Activated CD4-positive, alpha-beta memory T cell treated with anti-CD3 and anti-CD28 coated beads, Interleukin-2, amount 10 ng/mL, durations not matched to agents 7 days and 5 days (primary cell): ENCODE measurements at regions of chr17 and their contacts with region 1.

Region 1: DNA sequence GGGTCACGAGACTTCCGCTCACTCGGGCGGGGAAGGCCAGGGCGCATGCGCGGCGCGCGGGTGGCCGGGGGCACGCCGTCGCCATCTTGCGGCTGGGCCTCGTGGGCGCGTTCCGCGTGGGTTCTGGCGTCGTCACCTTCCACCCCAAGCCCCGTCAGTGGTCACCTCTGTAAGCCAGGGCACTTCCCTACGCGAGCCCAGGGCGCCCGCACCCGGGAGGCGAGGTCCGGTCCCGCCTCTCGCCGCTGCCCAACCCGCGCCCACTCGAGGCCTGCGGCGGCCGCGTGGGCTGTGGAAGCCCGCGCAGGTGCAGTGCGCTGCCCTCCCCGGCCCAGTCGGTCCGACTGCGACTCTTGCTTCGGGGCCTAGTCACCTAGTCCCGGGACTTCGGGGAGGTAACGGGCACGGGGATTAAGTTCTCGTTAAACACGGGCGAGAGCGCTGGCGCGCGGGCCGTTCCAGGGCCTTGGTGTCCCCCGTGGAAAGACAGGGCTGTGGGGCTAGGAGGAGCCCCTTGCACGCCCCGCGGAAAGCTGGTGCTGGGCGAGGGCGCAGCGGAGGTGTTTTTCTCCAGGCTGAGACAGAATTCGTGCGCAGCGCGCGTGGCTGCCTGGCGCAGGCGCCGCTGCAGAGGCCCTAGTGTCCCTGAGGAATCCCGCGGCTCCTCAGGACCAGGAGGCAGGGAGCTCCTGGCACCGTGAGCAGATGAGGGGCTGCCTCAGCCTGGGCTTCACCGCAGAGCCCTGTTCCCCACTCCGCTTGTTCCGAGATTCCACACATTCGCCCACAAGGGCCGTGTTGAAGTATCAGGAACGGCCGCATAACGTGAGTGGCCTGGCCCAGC is 472 bp upstream of the ARHGDIA start:
- DNase-seq: peak; percentile 95
- H3K4me3 Mint-ChIP-seq: peak overlapping the region; percentile 74
- H3K27ac Mint-ChIP-seq: peak overlapping the region; percentile 82
- H3K4me1 Mint-ChIP-seq: peaks cover 45% of the 10 kb centered on the region
- H3K27me3 Mint-ChIP-seq: no peaks in the 10 kb centered on the region

Region 2: DNA sequence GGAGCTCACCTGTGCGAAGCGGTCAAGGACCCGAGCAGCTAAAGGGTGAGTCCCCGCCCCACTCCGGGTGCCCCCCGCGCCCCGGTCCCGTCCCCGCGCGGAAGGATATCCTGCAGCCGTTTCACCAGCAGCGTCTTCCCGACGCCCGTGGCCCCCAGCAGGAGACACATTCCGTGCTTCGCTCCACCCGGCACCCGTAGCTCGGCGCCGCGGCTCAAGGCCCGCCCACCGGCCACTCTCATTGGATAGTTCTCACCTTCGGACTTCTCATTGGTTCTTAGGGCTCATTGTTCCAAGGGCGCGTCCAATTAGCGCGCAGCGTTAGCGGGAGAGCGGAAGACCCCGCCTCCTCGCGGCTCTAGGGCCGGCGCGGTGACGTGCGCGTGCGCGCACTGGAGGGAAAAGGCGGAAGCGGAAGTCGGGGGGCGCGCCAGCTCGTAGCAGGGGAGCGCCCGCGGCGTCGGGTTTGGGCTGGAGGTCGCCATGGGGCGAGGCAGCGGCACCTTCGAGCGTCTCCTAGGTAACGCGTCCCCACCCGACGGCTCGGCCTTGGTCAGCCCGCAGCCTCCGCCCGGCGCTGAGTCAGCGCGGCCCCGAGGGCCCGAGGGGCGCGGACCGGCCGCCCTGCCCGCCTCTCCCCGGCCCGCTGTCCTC is 187.9 kb before region 1 on chr17 and contains the starts of genes ARL16 and HGS:
- CTCF ChIA-PET with region 1: no interaction called
- POLR2A ChIA-PET with region 1: interaction called, 11 read pairs
- DNase-seq: peak; percentile 98
- H3K4me3 Mint-ChIP-seq: peak within 1 kb of the TSS; percentile 86
- H3K27ac Mint-ChIP-seq: peak within 1 kb of the TSS; percentile 90
- H3K4me1 Mint-ChIP-seq: peaks cover 42% of the 10 kb centered on the region
- H3K27me3 Mint-ChIP-seq: no peaks in the 10 kb centered on the region
- total RNA-seq, gene ARL16: 17.5 to 17.8 TPM
- total RNA-seq, gene HGS: 122 to 130 TPM

Region 3: GRCh38 chr17:81833160-81833920 is 38.3 kb before region 1 on chr17 and contains the start of gene MCRIP1:
- CTCF ChIA-PET with region 1: no interaction called
- POLR2A ChIA-PET with region 1: interaction called, 41 read pairs
- DNase-seq: peak; percentile 96
- H3K4me3 Mint-ChIP-seq: peak within 1 kb of the TSS; percentile 88
- H3K27ac Mint-ChIP-seq: peak within 1 kb of the TSS; percentile 92
- H3K4me1 Mint-ChIP-seq: peaks cover 31% of the 10 kb centered on the region
- H3K27me3 Mint-ChIP-seq: no peaks in the 10 kb centered on the region
- total RNA-seq, gene MCRIP1: 37.1 to 38.2 TPM

Region 4: DNA sequence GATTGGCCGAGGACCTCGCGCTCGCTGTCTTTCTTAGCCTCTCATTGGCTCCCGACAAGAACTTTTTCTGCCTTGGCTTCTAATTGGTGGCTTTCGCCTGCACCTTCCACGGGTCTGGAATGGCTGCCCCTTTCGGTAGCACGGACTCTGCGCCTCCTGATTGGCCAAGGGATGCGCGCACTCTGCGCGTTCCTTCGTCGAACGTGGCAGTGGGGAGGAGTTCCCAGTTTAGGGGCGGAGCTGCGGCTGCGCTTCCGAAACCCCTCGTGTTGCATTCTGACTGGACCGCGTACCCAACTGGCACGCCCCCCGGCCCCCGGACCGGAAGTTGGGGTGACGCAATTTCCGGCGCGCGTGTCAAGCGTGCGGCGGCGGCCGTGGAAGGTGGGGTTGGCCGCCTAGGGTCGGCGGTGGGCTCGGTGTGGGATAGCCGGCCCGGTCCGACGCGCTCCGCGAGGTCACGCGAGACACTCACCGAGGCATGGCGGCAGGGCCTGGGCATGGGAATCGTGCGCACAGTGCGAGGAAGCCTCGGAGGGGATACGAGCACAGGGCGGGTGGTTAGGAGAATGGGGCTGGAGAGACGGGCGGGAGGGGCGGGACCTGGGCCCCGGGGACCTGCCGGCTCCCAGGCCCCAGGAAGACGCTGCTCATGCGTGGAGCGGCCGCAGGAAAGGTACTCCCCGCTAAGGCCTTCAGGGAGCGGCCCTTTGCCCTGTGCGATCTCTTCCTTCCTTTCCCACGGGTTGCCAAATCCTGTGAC is 10.7 kb before region 1 on chr17:
- CTCF ChIA-PET with region 1: interaction called, 3 read pairs
- POLR2A ChIA-PET with region 1: interaction called, 133 read pairs
- DNase-seq: peak; percentile 99
- H3K4me3 Mint-ChIP-seq: peak overlapping the region; percentile 97
- H3K27ac Mint-ChIP-seq: peak overlapping the region; percentile 97
- H3K4me1 Mint-ChIP-seq: peaks cover 50% of the 10 kb centered on the region
- H3K27me3 Mint-ChIP-seq: no peaks in the 10 kb centered on the region

Region 5: DNA sequence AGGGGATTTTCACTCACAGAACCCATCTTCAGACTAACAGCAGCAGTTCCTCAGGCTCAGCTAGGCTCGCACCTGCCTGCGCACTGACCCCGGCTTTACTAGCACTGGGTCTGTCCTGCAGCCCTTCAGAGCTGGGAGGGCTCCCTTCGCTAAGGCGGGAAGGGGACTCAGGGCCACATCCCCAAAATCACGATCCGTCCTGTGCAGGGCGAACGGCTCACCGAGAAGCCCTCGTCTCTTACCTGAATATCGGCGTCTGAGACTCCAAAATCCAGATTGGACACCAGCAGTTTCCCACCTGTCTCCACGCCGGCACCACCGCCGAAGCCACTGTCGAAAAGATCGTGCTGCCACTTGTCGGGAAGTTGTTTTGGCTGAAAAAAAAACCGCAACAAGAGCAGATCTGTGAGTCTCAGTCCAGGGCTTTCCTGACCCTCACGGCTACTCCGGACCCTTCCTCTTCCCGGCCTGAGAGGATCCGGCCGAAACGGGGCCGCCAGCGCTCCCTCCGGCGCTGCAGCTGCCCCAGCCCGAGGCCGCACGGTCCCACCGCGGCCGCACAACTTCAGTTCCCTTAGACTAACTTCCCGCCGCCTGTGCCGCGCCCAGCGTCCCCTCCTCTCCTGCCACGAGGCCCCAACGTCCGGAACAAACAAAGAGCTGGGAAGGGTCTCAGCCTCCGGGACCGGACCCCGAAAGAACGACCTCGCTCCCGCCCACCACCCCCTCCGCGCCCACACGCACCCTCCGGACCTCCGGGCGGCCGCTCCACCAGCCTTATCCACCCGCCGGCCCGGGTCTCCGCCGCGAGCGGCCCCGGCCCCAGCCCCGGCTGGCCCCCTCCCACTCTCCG is 19.1 kb after region 1 on chr17:
- CTCF ChIA-PET with region 1: no interaction called
- POLR2A ChIA-PET with region 1: interaction called, 140 read pairs
- DNase-seq: peak; percentile 46
- H3K4me3 Mint-ChIP-seq: peak overlapping the region; percentile 87
- H3K27ac Mint-ChIP-seq: peak overlapping the region; percentile 94
- H3K4me1 Mint-ChIP-seq: peaks cover 43% of the 10 kb centered on the region
- H3K27me3 Mint-ChIP-seq: no peaks in the 10 kb centered on the region

Region 6: GRCh38 chr17:81927653-81928543 is 56.3 kb after region 1 on chr17 and contains the start of gene MAFG:
- CTCF ChIA-PET with region 1: interaction called, 6 read pairs
- POLR2A ChIA-PET with region 1: interaction called, 62 read pairs
- DNase-seq: peak; percentile 91
- H3K4me3 Mint-ChIP-seq: peak within 1 kb of the TSS; percentile 91
- H3K27ac Mint-ChIP-seq: peak within 1 kb of the TSS; percentile 94
- H3K4me1 Mint-ChIP-seq: peaks cover 35% of the 10 kb centered on the region
- H3K27me3 Mint-ChIP-seq: peaks cover 4% of the 10 kb centered on the region
- total RNA-seq, gene MAFG: 35.2 to 36.5 TPM